Motor neuron (in vitro differentiated cells): ENCODE measurements at regions of chr15 and their contacts with region 1.

Region 1: GRCh38 chr15:52379395-52380106 is 83.9 kb upstream of the MYO5C start:
- ATAC-seq: peak in 1 of 8 experiments; percentile 68
- H3K4me3 ChIP-seq: no peak overlapping the region
- H3K27ac ChIP-seq: no peak overlapping the region
- H3K4me1 ChIP-seq: no peaks in the 10 kb centered on the region

Region 2: DNA sequence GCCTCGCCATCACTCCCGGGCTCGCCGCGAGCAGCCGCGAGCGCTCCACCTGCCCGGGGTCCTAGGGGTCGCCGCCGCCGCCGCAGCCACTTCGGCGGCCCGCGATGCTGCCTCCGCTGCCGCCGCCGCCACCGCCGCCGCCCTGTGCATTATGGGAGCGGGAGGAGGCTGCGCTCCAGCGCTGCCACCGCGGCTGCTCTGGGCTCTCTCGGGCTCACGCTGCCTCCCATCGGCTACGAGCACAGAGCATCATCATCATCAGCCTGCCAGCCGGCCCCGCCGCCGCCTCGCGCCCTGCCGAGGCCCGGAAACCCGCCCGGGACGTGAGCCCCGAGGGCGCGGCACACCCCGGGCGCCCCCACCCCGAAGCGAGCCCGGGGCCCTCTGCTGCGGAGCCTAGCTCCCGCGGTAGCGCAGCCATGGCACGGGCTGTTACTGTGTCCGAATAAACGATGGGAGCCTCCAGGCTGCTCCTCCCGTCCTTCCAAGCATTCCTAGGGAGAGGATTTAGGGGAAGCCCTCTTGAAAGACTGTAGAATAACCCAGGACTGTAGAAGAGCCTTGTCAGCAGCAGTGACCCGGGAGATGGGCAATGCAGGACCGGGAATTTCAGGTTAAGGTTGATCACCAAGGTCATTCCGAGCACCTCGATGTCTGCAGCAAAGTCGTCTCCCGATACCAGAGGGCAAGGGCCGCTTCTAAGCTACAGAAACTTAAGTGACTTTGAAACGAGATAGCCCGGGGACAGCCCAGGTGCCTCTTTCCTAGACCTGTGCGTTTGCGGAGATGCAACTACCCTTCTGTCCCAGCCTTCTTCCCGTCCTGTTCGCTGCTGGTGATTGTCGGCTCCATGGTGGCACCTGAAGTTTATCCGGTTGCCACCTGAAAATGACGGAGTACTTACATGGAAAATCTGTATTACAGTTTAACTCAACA is 149.7 kb after region 1 on chr15:
- in situ Hi-C with region 1: loop called in 1 of 9 experiments (anchors 25 kb)
- ATAC-seq: peak in 7 of 8 experiments; percentile 50 to 89 (median 81)
- H3K4me3 ChIP-seq: peak overlapping the region; percentile 66 to 84 (median 80)
- H3K27ac ChIP-seq: peak overlapping the region; percentile 86 to 92
- H3K4me1 ChIP-seq: peaks cover 2 to 8% of the 10 kb centered on the region in 2 donors